WTC11 (cell line): ENCODE measurements at regions of chr4 and their contacts with region 1.

Region 1: DNA sequence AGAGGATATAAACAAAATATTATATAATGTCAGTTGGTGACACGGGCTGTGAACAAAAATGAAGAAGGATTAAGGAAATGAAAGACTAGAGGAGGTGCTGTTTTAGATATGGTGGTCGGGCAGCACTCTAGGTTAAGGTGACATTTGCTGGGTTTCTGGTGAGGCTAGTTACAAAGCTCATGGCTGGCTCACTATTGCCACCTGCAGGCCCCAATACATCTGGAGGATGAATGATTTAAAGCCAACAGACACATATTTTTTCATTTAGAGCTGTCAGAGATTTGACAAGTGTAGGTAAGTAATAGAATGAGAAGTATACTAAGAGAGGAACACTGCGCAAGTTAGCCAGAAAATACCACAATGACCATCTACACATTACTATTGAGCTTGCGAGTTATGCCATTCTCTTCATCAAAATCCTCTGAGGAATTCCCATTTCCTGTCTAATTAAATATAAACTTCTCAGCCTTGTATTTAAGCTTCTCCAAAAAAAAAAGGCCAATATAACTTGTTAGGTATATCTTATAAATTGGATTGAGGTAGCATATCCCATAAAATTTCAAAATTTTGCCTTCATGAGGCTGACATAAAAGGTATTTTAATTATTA is 6.4 kb upstream of the FGG start:
- DNase-seq: peak; percentile 74
- ATAC-seq: peak; percentile 92
- H3K4me3 Mint-ChIP-seq: no peak overlapping the region
- H3K27ac Mint-ChIP-seq: no peak overlapping the region
- H3K4me1 Mint-ChIP-seq: peaks cover 18% of the 10 kb centered on the region
- H3K27me3 Mint-ChIP-seq: no peaks in the 10 kb centered on the region; the same call in 1 of the 2 replicates
- CTCF ChIP-seq: peak; percentile 51

Region 2: DNA sequence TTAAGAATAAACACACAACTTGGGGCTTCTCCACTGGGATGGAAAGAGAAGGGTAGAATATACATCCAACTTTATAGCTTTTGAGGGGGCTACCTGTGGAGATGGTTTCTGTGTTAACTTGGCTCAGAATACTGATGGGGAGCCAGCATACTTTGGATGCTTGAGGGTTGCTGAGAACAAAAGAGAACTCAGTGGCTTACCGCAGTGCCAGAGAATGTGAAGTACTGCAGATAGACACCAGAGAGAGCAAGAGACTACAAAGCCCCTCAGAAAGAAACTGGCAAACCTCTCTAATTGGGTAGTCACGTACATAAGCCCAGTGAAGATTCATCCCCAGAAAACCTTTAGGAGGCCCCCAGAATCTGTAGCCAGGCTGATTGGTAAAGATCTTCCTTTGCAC is 341.6 kb before region 1 on chr4:
- CTCF ChIA-PET with region 1: no interaction called
- POLR2A ChIA-PET with region 1: no interaction called
- DNase-seq: peak; percentile 39
- ATAC-seq: peak; percentile 100
- H3K4me3 Mint-ChIP-seq: no peak overlapping the region
- H3K27ac Mint-ChIP-seq: peak overlapping the region; percentile 58; the same call in 1 of the 2 replicates
- H3K4me1 Mint-ChIP-seq: peaks cover 21% of the 10 kb centered on the region
- H3K27me3 Mint-ChIP-seq: no peaks in the 10 kb centered on the region
- CTCF ChIP-seq: no peak

Region 3: GRCh38 chr4:154551872-154552686 is 66.7 kb before region 1 on chr4:
- CTCF ChIA-PET with region 1: interaction called, 104 read pairs
- POLR2A ChIA-PET with region 1: no interaction called
- DNase-seq: peak; percentile 68
- ATAC-seq: peak; percentile 57
- H3K4me3 Mint-ChIP-seq: no peak overlapping the region
- H3K27ac Mint-ChIP-seq: no peak overlapping the region
- H3K4me1 Mint-ChIP-seq: peaks cover 9% of the 10 kb centered on the region
- H3K27me3 Mint-ChIP-seq: no peaks in the 10 kb centered on the region
- CTCF ChIP-seq: peak; percentile 51

Region 4: GRCh38 chr4:154569028-154569427 is 49.8 kb before region 1 on chr4:
- CTCF ChIA-PET with region 1: interaction called, 15 read pairs
- POLR2A ChIA-PET with region 1: no interaction called
- DNase-seq: no peak
- ATAC-seq: no peak
- H3K4me3 Mint-ChIP-seq: no peak overlapping the region
- H3K27ac Mint-ChIP-seq: no peak overlapping the region
- H3K4me1 Mint-ChIP-seq: peaks cover 10% of the 10 kb centered on the region
- H3K27me3 Mint-ChIP-seq: no peaks in the 10 kb centered on the region
- CTCF ChIP-seq: no peak

Region 5: GRCh38 chr4:154595807-154596206 is 23.0 kb before region 1 on chr4:
- CTCF ChIA-PET with region 1: interaction called, 16 read pairs
- POLR2A ChIA-PET with region 1: no interaction called
- DNase-seq: no peak
- ATAC-seq: no peak
- H3K4me3 Mint-ChIP-seq: no peak overlapping the region
- H3K27ac Mint-ChIP-seq: no peak overlapping the region
- H3K4me1 Mint-ChIP-seq: no peaks in the 10 kb centered on the region; the same call in 1 of the 2 replicates
- H3K27me3 Mint-ChIP-seq: no peaks in the 10 kb centered on the region
- CTCF ChIP-seq: no peak

Region 6: DNA sequence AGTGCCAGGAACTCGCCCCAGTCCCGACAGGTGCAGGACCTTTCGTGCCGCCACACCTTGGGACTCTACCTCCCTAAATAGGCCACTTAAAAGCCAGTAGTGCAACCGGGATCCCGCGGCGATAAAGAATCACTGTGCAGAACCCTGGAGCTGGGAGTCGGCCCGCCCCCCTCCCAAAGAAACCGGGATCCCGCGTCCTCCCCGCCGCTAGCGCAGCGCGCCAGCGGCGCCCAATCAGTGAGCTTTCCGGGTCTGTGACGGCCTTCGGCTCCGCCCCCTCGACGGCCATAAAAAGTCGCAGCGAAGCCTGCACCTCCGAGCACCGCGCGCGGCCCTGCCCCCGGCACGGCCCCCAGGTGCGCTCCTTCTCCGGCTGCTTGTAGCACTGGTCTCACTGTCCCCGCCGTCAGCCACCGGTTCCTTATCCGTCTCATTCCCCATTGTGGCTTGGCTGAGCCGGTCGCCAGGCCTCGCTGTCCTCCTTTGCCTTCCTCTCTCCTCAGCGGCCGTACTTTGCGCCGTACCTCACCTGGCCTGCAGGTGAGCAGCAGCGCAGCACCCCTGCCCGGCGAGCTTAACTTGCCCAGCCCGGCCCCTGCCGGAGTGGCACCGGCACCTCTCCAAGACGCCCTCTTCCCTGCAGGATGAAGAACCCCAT is 125.0 kb after region 1 on chr4 and contains the start of gene LRAT:
- CTCF ChIA-PET with region 1: interaction called, 12 read pairs
- POLR2A ChIA-PET with region 1: no interaction called
- DNase-seq: peak; percentile 90
- ATAC-seq: peak; percentile 76
- H3K4me3 Mint-ChIP-seq: peak within 1 kb of the TSS; percentile 95
- H3K27ac Mint-ChIP-seq: peak within 1 kb of the TSS; percentile 89
- H3K4me1 Mint-ChIP-seq: peaks cover 62% of the 10 kb centered on the region
- H3K27me3 Mint-ChIP-seq: peaks cover 38% of the 10 kb centered on the region
- CTCF ChIP-seq: peak; percentile 33
- total RNA-seq, gene LRAT: 33.0 to 37.7 TPM (median 34.5 TPM) in 3 replicates